MCF 10A (cell line): ENCODE measurements at regions of chr5 and their contacts with region 1.

Region 1: GRCh38 chr5:151164686-151165392 is 7.3 kb upstream of the ANXA6 start:
- DNase-seq: peak; percentile 91
- H3K4me3 Mint-ChIP-seq: no peak overlapping the region
- H3K27ac Mint-ChIP-seq: no peak overlapping the region
- H3K4me1 Mint-ChIP-seq: no peaks in the 10 kb centered on the region
- H3K27me3 Mint-ChIP-seq: peaks cover 15% of the 10 kb centered on the region
- CTCF ChIP-seq: peak; percentile 96

Region 2: DNA sequence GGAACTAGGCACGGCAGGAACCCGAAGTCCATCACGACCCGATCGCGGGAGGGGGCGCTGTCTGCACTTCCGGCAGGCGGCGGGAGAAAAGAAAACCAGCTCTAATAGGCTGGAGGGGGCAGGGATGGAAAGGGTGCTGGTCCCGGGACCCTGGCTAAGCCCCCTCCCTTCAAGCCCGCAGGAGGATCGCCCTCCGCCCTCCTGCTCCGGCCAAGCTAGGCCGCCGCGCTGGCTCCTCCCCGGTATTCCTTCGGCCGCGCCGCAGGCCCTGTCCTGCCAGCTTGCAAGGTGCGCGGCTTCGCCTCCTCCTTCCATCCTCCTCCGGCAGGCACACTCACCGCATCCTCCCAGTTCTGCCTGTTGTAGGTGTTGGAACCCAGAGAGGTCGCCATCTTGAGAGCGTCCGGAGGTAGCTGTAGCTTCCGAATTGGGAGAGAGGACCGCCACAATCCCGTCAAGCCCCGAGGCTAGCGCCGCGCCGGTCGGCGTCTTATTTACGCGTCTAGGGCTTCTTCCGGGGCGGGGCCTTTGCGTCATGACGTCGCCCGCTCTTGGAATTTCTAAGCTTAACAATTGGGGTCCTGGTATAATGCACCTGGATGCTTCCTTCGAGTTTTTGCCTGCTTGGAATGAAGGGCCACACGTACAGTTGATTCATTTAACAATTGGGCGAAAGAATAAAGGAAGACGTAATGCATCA is 464.1 kb before region 1 on chr5 and contains the start of gene RBM22:
- CTCF ChIA-PET with region 1: no interaction called
- POLR2A ChIA-PET with region 1: no interaction called
- intact Hi-C with region 1: loop called (anchors 10 kb)
- DNase-seq: peak; percentile 95
- H3K4me3 Mint-ChIP-seq: no peak within 1 kb of the TSS
- H3K27ac Mint-ChIP-seq: no peak within 1 kb of the TSS
- H3K4me1 Mint-ChIP-seq: peaks cover 6% of the 10 kb centered on the region
- H3K27me3 Mint-ChIP-seq: no peaks in the 10 kb centered on the region
- CTCF ChIP-seq: peak; percentile 76
- total RNA-seq, gene RBM22: 66.0 and 66.9 TPM in 2 replicates

Region 3: GRCh38 chr5:150904479-150905318 is 260.1 kb before region 1 on chr5 and contains the start of gene ZNF300:
- CTCF ChIA-PET with region 1: no interaction called
- POLR2A ChIA-PET with region 1: no interaction called
- intact Hi-C with region 1: no loop called
- DNase-seq: peak; percentile 98
- H3K4me3 Mint-ChIP-seq: peak within 1 kb of the TSS; percentile 92
- H3K27ac Mint-ChIP-seq: peak within 1 kb of the TSS; percentile 99
- H3K4me1 Mint-ChIP-seq: peaks cover 16% of the 10 kb centered on the region
- H3K27me3 Mint-ChIP-seq: no peaks in the 10 kb centered on the region
- CTCF ChIP-seq: no peak
- total RNA-seq, gene ZNF300: 14.6 and 15.4 TPM in 2 replicates

Region 4: DNA sequence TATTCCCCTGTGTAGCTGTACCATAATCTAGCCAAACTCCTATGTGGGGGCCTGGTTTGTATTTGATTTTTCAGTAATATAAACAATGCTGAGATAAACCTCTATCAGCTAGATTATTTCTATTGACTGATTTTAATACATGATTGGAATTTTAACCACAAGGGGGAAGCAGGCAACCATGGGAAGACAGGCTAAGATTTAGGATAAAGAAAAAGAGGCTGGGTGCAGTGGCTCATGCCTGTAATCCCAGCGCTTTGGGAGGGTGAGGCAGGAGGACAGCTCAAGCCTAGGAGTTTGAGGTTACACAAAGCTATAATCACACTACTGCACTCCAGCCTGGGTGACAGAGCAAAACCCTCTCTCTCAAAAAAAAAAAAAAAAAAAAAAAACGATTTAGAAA is 162.6 kb before region 1 on chr5:
- CTCF ChIA-PET with region 1: interaction called, 108 read pairs
- POLR2A ChIA-PET with region 1: no interaction called
- intact Hi-C with region 1: loop called (anchors 1 kb)
- DNase-seq: peak; percentile 77
- H3K4me3 Mint-ChIP-seq: no peak overlapping the region
- H3K27ac Mint-ChIP-seq: no peak overlapping the region
- H3K4me1 Mint-ChIP-seq: no peaks in the 10 kb centered on the region
- H3K27me3 Mint-ChIP-seq: no peaks in the 10 kb centered on the region
- CTCF ChIP-seq: peak; percentile 79

Region 5: GRCh38 chr5:151051066-151051930 is 113.5 kb before region 1 on chr5:
- CTCF ChIA-PET with region 1: interaction called, 48 read pairs
- POLR2A ChIA-PET with region 1: no interaction called
- intact Hi-C with region 1: loop called (anchors 2 kb)
- DNase-seq: peak; percentile 83
- H3K4me3 Mint-ChIP-seq: no peak overlapping the region
- H3K27ac Mint-ChIP-seq: peak overlapping the region; percentile 62
- H3K4me1 Mint-ChIP-seq: no peaks in the 10 kb centered on the region
- H3K27me3 Mint-ChIP-seq: no peaks in the 10 kb centered on the region
- CTCF ChIP-seq: peak; percentile 89

Region 6: DNA sequence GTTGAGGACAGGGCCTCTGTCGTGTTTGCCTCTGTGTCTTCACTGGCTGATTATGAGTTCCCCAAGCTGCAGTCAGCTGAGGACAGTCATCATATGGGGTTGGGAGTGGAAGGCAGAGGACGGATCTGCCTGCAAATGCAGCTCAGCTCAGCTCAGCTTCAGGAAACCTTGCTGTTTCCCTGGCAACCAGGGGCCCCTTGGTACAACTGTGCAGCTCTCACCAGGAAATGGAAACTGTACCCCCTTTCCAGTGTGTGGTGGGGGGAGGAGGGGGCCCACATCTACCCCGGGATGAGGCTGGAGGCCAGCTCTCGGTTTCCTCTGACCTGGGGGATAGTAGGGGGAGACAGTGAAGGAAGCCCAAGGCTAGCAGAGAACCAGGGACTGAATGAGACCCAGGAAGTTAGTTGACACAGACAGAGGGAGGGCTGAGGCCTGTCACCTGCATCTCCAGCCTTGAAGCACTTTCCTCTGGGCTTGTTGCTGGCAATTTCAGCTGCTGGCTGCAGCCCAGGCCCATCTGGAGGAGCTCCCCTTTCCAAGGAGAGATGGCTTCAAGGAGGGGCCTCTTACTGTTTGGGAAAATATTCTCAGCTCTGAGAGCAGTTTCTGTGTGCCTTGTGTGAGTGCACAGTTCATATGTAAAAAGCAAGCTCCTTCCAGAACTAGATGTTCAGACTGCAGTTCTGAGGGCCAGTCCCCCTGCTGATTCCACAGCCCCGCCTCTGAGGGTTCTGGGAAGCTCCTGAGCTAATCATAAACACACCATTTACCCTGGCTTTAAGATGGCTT is 14.2 kb before region 1 on chr5:
- CTCF ChIA-PET with region 1: interaction called, 112 read pairs
- POLR2A ChIA-PET with region 1: interaction called, 3 read pairs
- intact Hi-C with region 1: no loop called
- DNase-seq: no peak
- H3K4me3 Mint-ChIP-seq: no peak overlapping the region
- H3K27ac Mint-ChIP-seq: no peak overlapping the region
- H3K4me1 Mint-ChIP-seq: peaks cover 4% of the 10 kb centered on the region
- H3K27me3 Mint-ChIP-seq: no peaks in the 10 kb centered on the region
- CTCF ChIP-seq: no peak

Region 7: GRCh38 chr5:151230048-151230680 is 65.3 kb after region 1 on chr5:
- CTCF ChIA-PET with region 1: interaction called, 98 read pairs
- POLR2A ChIA-PET with region 1: no interaction called
- intact Hi-C with region 1: no loop called
- DNase-seq: no peak
- H3K4me3 Mint-ChIP-seq: no peak overlapping the region
- H3K27ac Mint-ChIP-seq: no peak overlapping the region
- H3K4me1 Mint-ChIP-seq: peaks cover 9% of the 10 kb centered on the region
- H3K27me3 Mint-ChIP-seq: no peaks in the 10 kb centered on the region
- CTCF ChIP-seq: no peak